PC-3 (cell line): ENCODE measurements at regions of chr6 and their contacts with region 1.

Region 1: DNA sequence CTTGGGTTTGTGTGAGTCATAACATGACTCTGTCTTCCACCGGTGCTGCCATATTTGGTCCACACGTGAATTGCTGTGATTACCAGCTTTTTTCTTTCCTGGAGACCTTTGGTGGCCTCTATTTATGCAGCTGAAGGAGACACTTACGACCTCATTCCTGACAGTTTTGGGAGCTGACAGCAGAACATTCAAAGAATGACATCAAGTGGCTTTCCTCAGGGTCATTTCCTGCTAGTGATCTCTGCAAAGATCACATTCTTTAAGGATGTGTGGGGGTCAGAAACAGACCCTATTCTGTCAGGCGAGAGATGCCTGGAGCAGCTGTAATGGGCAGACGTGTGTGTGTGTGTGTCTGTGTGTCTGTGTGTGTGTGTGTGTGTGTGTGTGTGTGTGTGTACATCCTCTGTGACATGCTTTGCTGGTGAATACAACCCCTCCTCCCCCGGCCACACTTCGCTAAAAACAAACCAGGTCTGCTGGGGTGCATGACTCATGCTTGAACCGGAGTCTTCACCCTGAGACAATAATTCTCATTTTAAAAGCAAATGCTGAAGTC is 115.6 kb downstream of the TMEM170B start:
- DNase-seq: peak; percentile 74
- ATAC-seq: peak; percentile 64
- H3K4me3 ChIP-seq: no peak overlapping the region
- H3K27ac ChIP-seq: no peak overlapping the region
- H3K4me1 ChIP-seq: peaks cover 37% of the 10 kb centered on the region
- H3K27me3 ChIP-seq: no peaks in the 10 kb centered on the region
- CTCF ChIP-seq: no peak

Region 2: GRCh38 chr6:11450037-11450436 is 203.1 kb before region 1 on chr6:
- CTCF ChIA-PET with region 1: no interaction called
- POLR2A ChIA-PET with region 1: no interaction called
- intact Hi-C with region 1: no loop called
- DNase-seq: no peak
- ATAC-seq: no peak
- H3K4me3 ChIP-seq: no peak overlapping the region
- H3K27ac ChIP-seq: no peak overlapping the region
- H3K4me1 ChIP-seq: no peaks in the 10 kb centered on the region
- H3K27me3 ChIP-seq: no peaks in the 10 kb centered on the region
- CTCF ChIP-seq: no peak

Region 3: DNA sequence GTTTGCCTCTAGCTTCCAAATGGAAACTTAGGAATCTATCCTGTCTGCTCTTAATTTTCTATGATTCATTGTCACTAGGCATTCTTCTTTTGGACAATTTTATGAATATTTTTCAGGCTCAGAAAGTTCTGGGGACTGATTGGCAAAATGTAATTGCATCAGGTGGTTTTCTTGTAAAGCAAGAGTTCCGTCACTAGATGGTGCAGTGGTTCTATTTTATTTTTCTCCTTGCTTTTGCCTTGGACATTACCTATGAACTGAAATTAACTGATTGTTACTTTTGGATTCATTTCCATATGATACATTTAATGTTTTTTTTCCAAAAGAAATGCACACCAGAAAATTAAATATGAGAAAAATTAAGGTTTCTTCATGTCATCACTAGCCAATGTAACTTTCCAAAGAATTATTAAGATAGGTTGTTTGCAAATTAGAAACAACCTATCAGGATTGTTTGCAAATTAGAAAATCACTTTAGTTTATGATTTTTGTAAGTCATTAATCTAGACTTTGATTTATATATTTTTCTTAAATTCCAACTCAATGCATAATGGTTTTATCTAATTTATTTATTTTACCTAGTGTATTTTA is 67.6 kb before region 1 on chr6:
- CTCF ChIA-PET with region 1: no interaction called
- POLR2A ChIA-PET with region 1: no interaction called
- intact Hi-C with region 1: loop called (anchors 1 kb)
- DNase-seq: peak; percentile 80
- ATAC-seq: peak; percentile 29; the same call in 1 of the 2 replicates
- H3K4me3 ChIP-seq: no peak overlapping the region
- H3K27ac ChIP-seq: no peak overlapping the region
- H3K4me1 ChIP-seq: peaks cover 11% of the 10 kb centered on the region
- H3K27me3 ChIP-seq: no peaks in the 10 kb centered on the region
- CTCF ChIP-seq: peak; percentile 83

Region 4: DNA sequence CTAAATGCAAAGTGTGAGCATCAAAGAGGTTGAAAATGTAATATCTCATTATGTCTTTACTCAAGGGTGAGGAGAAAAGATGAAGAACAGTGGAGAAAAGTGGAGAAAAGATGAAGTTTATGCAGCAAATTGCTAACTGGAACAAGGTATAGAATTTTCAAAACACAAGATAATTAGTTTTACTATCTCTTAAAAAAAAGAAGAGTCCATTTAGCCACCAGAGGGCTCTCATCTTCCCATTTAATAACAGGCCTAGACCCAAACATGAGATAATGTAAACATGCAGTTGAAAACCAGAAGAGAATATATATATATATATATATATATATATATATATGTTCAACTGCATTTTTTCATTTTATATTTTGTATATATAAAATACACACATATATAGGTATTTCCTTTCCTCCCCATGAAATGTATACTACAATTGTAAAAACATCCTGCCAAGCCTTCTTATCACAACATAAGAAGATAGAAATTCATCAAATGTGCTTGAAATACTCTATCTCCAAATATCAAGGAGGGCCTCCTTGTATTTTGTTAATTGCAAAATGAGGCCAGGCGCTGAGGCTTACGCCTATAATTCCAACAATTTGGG is 47.1 kb after region 1 on chr6:
- CTCF ChIA-PET with region 1: no interaction called
- POLR2A ChIA-PET with region 1: no interaction called
- intact Hi-C with region 1: loop called (anchors 1 kb)
- DNase-seq: peak; percentile 74
- ATAC-seq: no peak
- H3K4me3 ChIP-seq: no peak overlapping the region
- H3K27ac ChIP-seq: no peak overlapping the region
- H3K4me1 ChIP-seq: peaks cover 15% of the 10 kb centered on the region
- H3K27me3 ChIP-seq: no peaks in the 10 kb centered on the region
- CTCF ChIP-seq: peak; percentile 59

Region 5: DNA sequence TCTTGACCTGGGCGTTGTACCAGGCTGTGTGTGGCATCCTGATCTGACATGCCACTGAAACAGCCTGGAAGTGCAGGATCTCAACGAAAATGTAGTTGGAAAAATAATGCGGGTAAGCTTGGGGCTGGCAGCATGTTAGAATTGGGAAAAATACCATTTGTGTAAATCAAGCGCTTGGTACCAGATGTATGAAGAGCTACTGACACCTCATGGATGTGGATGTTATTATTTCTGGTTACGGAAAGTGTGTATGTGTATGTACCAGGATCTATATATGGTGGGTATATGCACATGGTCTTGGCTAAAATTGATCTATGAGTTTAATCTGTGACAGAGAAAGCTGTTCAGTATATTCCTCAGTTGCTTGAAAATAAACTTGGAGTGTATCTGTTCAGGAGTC is 381.7 kb after region 1 on chr6:
- CTCF ChIA-PET with region 1: no interaction called
- POLR2A ChIA-PET with region 1: no interaction called
- intact Hi-C with region 1: loop called (anchors 2 kb)
- DNase-seq: no peak
- ATAC-seq: peak; percentile 42; the same call in 1 of the 2 replicates
- H3K4me3 ChIP-seq: no peak overlapping the region
- H3K27ac ChIP-seq: no peak overlapping the region
- H3K4me1 ChIP-seq: peaks cover 6% of the 10 kb centered on the region; the same call in 1 of the 2 replicates
- H3K27me3 ChIP-seq: no peaks in the 10 kb centered on the region
- CTCF ChIP-seq: peak; percentile 29; the same call in 1 of the 2 replicates

Region 6: GRCh38 chr6:12150812-12151432 is 497.8 kb after region 1 on chr6:
- CTCF ChIA-PET with region 1: no interaction called
- POLR2A ChIA-PET with region 1: no interaction called
- intact Hi-C with region 1: loop called (anchors 1 kb)
- DNase-seq: peak; percentile 72
- ATAC-seq: peak; percentile 35; the same call in 1 of the 2 replicates
- H3K4me3 ChIP-seq: no peak overlapping the region
- H3K27ac ChIP-seq: peak overlapping the region; percentile 80
- H3K4me1 ChIP-seq: peaks cover 41% of the 10 kb centered on the region
- H3K27me3 ChIP-seq: no peaks in the 10 kb centered on the region
- CTCF ChIP-seq: peak; percentile 94

Region 7: DNA sequence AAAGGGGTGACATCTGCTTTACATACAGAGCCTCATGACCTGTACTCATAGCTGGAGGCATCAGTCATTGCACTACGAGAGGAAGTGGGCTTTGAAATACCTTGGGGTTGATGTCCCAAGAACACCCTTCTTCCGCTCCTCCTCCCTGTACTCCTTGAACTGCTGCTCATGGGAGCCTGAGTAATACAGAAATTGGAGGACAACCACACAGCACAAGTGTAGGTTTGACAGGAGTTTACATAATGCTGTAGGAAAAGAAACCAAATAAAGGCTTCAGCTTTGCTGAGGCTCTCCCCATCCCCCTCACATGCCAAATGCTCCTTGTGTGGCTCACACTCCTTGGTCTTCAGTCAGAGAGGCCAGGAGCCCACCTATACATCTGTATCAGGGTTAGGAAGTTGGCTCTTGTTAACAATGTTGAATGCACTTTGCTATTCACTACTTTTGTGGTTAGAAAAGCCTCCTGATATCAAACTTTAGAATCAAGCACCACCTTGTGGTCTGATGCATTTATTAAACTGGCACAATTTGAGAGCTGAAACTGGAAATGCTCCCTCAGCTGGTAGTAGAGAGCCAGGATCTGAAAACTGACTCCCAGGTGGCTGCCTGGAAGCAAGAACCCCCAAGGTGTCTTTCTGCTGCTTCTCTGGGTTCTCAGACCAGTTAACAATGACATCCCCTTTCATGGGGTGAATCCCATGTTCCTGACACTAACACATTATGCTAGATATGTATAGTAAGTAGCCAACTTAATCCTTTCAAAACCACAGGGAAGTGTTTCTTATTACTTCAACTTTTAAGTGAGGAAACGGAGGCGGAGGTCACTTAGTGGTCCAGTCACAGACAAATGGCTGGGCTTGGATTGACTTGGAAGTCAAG is 580.8 kb after region 1 on chr6:
- CTCF ChIA-PET with region 1: no interaction called
- POLR2A ChIA-PET with region 1: no interaction called
- intact Hi-C with region 1: loop called (anchors 1 kb)
- DNase-seq: peak; percentile 90
- ATAC-seq: peak; percentile 94
- H3K4me3 ChIP-seq: no peak overlapping the region
- H3K27ac ChIP-seq: no peak overlapping the region
- H3K4me1 ChIP-seq: peaks cover 10% of the 10 kb centered on the region
- H3K27me3 ChIP-seq: no peaks in the 10 kb centered on the region
- CTCF ChIP-seq: peak; percentile 97